AG04449 (cell line): ENCODE measurements at regions of chr4 and their contacts with region 1.

Region 1: GRCh38 chr4:33649015-33649414 is 2595.3 kb downstream of the ARAP2 start:
- DNase-seq: peak; percentile 10
- H3K4me3 ChIP-seq: no peak overlapping the region
- CTCF ChIP-seq: peak; percentile 69

Region 2: DNA sequence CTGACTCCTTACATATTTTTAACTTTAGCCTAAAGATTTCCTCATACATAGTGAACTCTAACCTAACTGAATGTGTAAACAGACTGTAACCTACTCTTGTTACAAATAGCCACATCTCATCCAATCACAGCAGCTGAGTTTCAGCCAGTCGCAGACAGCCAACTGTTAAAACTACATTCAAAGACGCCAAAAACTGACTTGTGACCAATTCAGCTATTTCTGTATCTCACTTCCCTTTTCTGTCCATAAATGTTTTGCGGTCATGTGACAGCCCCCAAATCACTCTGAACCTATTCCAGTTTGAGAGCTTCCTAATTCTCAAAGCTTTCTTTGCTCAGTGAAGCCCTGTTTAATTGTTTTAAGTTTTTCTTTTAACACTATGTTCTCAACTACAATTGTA is 136.6 kb before region 1 on chr4:
- CTCF ChIA-PET with region 1: no interaction called
- POLR2A ChIA-PET with region 1: no interaction called
- DNase-seq: no peak
- H3K4me3 ChIP-seq: no peak overlapping the region
- CTCF ChIP-seq: no peak

Region 3: GRCh38 chr4:34422472-34423175 is 773.6 kb after region 1 on chr4:
- CTCF ChIA-PET with region 1: interaction called, 19 read pairs
- POLR2A ChIA-PET with region 1: no interaction called
- DNase-seq: no peak
- H3K4me3 ChIP-seq: no peak overlapping the region
- CTCF ChIP-seq: no peak